CD4-positive, alpha-beta memory T cell (primary cell): ENCODE measurements at regions of chr14 and their contacts with region 1.

Region 1: GRCh38 chr14:73503648-73504047 is 12.9 kb downstream of the RIOX1 start:
- DNase-seq: no peak
- H3K4me3 ChIP-seq: no peak overlapping the region
- H3K4me3 Mint-ChIP-seq: no peak overlapping the region
- H3K27ac ChIP-seq: no peak overlapping the region
- H3K27ac Mint-ChIP-seq: no peak overlapping the region
- H3K4me1 ChIP-seq: no peaks in the 10 kb centered on the region
- H3K4me1 Mint-ChIP-seq: peaks cover 0 to 11% (median 1%) of the 10 kb centered on the region in 4 donors
- H3K27me3 ChIP-seq: no peaks in the 10 kb centered on the region
- H3K27me3 Mint-ChIP-seq: no peaks in the 10 kb centered on the region

Region 2: DNA sequence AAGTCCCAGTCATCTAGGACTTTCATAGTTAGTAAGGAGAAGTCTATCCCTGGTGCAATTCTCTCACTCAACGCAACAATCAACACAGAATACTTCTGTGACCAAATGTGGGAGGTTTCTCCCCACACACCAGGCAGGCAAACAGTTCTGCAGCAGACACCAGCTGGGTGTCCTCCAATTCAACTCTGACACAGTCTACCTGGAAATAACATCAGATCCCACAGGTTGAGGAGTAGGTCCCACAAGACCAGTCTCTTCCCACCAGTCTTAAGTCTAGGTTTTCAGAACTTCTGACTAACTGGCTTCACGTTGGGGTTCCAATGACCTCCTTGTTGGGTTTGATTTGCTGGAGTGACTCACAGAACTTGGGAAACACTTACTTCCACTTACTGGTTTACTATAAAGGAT is 123.5 kb after region 1 on chr14:
- CTCF ChIA-PET with region 1: interaction called, 106 read pairs
- POLR2A ChIA-PET with region 1: no interaction called
- intact Hi-C with region 1: no loop called
- DNase-seq: no peak
- H3K4me3 ChIP-seq: no peak overlapping the region
- H3K4me3 Mint-ChIP-seq: no peak overlapping the region
- H3K27ac ChIP-seq: no peak overlapping the region
- H3K27ac Mint-ChIP-seq: no peak overlapping the region
- H3K4me1 ChIP-seq: no peaks in the 10 kb centered on the region
- H3K4me1 Mint-ChIP-seq: no peaks in the 10 kb centered on the region
- H3K27me3 ChIP-seq: no peaks in the 10 kb centered on the region
- H3K27me3 Mint-ChIP-seq: peaks cover 2 to 10% of the 10 kb centered on the region in 2 donors

Region 3: DNA sequence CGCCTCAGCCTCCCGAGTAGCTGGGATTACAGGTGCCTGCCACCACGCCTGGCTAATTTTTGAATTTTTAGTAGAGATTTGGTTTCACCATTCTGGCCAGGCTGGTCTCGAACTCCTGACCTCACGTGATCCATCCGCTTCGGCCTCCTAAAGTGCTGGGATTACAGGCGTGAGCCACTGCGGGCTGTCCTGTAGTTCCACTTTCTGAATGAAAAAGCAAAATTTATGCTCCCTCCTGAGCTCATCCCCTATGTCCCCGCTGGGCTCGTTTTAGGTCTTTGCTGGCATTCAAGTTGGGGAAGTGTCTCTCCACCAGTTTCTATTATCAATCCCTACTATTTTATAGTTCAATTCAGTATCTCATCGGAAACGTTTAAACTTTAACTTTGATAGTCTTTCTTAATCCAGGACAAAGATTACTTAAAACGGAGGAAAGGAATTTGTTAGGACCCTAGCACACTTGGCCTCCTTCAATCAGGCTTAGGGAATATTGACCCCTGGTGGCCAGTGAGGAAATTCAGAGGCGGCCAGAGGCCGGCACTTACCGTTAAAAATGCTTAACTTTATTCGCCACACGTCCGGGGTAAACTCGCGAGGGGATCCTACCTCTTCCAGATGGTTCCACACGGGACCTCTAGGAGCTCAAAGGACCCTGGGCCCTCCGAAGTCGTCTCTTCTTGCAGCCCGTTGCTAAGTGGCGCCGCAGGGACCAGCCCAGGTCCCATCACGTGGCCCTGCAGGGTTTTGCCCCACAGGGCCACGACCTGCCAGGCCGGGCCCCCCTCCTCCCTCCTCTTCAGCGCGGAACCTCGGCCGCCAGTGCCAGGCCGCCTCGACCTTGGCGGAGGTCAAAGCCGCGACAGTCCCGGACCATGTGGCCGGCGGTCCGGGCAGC is 129.7 kb after region 1 on chr14:
- CTCF ChIA-PET with region 1: interaction called, 106 read pairs
- POLR2A ChIA-PET with region 1: no interaction called
- intact Hi-C with region 1: loop called (anchors 1 kb)
- DNase-seq: peak; percentile 52 to 67 (median 57)
- H3K4me3 ChIP-seq: peak overlapping the region; percentile 11 to 57
- H3K4me3 Mint-ChIP-seq: peak overlapping the region; percentile 71 to 84 (median 80)
- H3K27ac ChIP-seq: no peak overlapping the region
- H3K27ac Mint-ChIP-seq: peak overlapping the region in 3 of 7 donors; percentile 6 to 59 (median 49)
- H3K4me1 ChIP-seq: peaks cover 8% of the 10 kb centered on the region
- H3K4me1 Mint-ChIP-seq: peaks cover 3 to 7% (median 4%) of the 10 kb centered on the region in 4 donors
- H3K27me3 ChIP-seq: no peaks in the 10 kb centered on the region
- H3K27me3 Mint-ChIP-seq: peaks cover 5 to 18% of the 10 kb centered on the region in 2 donors

Region 4: GRCh38 chr14:73644531-73645247 is 141.0 kb after region 1 on chr14 and contains the start of gene DNAL1:
- CTCF ChIA-PET with region 1: interaction called, 18 read pairs
- POLR2A ChIA-PET with region 1: no interaction called
- intact Hi-C with region 1: no loop called
- DNase-seq: peak; percentile 88 to 90 (median 89)
- H3K4me3 ChIP-seq: peak within 1 kb of the TSS; percentile 73 to 81
- H3K4me3 Mint-ChIP-seq: peak within 1 kb of the TSS; percentile 89 to 99 (median 95)
- H3K27ac ChIP-seq: peak within 1 kb of the TSS; percentile 64
- H3K27ac Mint-ChIP-seq: peak within 1 kb of the TSS; percentile 76 to 97 (median 97)
- H3K4me1 ChIP-seq: peaks cover 11% of the 10 kb centered on the region
- H3K4me1 Mint-ChIP-seq: peaks cover 11 to 19% (median 17%) of the 10 kb centered on the region in 4 donors
- H3K27me3 ChIP-seq: no peaks in the 10 kb centered on the region
- H3K27me3 Mint-ChIP-seq: no peaks in the 10 kb centered on the region
- total RNA-seq, gene DNAL1: 5.4 to 7.8 TPM

Region 5: DNA sequence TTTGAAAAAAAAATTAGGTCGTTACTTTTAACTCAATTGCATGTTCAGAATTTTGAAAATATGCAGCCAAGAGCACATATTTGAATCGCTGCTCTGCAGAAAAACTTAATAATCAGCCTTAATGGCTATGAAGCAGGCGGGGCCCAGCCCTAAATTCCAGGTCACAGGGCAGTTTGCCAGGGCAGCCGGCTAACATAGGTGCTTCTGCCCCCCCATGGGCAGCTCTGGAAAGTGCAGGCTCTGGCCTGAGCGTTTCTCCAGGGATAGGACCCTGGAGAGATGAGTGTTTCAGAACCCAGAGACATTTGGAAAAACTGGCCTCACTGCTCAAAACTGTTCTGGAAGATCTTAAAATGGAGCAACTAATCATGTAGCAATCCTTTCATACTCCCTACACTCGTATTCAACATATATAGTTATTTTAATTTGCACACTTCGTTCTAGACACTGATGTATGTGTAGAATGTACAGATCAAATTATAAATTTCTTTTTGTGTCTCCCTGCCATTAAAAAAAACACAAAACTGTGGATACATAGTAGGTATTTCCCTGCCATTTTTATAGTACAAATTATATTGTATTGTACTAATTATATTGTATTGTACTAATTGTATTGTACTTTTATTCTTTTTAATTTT is 322.0 kb after region 1 on chr14:
- CTCF ChIA-PET with region 1: no interaction called
- POLR2A ChIA-PET with region 1: no interaction called
- intact Hi-C with region 1: loop called (anchors 5 kb)
- DNase-seq: peak; percentile 68 to 75 (median 74)
- H3K4me3 ChIP-seq: no peak overlapping the region
- H3K4me3 Mint-ChIP-seq: no peak overlapping the region
- H3K27ac ChIP-seq: no peak overlapping the region
- H3K27ac Mint-ChIP-seq: peak overlapping the region in 1 of 7 donors; percentile 42
- H3K4me1 ChIP-seq: peaks cover 13% of the 10 kb centered on the region
- H3K4me1 Mint-ChIP-seq: peaks cover 7 to 11% (median 10%) of the 10 kb centered on the region in 4 donors
- H3K27me3 ChIP-seq: no peaks in the 10 kb centered on the region
- H3K27me3 Mint-ChIP-seq: no peaks in the 10 kb centered on the region